Caco-2 (cell line): ENCODE measurements at regions of chr14 and their contacts with region 1.

Region 1: DNA sequence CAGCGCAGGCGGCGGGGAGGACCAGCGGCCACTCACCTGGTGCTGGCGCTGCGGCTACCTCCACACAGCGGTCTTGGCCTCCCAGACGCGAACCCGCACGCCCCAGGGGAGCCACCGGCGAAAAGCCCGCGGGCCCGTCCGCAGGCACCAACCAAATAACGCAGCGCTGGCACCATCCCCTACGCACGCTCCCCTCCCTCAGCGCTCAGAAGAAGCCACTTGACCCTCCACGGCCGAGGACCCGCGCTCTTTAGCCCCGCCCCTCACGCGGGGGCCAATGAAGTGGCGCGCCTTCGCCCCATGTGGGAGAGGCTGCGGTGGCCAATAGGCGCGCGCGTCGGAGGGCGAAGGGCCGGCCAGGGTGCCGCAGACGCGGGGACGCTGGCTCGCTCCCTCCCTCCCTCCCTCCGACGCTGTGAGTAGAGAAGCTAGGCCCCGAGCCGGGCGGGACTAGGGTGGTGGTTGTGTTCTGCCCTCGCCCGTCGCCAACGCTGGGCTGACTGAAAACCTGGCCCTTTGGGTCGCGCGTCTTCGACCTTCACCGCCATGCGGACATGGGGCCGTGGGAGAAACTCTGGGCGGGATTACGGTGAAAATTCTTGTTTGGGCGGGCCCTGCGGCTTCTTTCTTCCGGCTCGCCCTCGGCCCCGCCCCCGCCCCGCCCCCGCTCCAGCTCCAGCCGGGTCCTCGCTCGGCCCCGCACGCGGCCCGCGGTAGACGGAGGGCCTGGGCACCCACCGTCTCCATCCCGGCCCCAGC is at the starts of genes DMAC2L and L2HGDH:
- DNase-seq: peak; percentile 94 to 96
- H3K4me3 ChIP-seq: peak within 1 kb of the TSS; percentile 78
- H3K4me3 Mint-ChIP-seq: peak within 1 kb of the TSS; percentile 87
- H3K27ac Mint-ChIP-seq: peak within 1 kb of the TSS; percentile 92
- H3K4me1 ChIP-seq: 0 out of 2 replicates have a peak, but pooled peaks cover 5% of the 10 kb centered on the region
- H3K4me1 Mint-ChIP-seq: peaks cover 7% of the 10 kb centered on the region
- H3K27me3 ChIP-seq: no peaks in the 10 kb centered on the region
- H3K27me3 Mint-ChIP-seq: no peaks in the 10 kb centered on the region
- CTCF ChIP-seq: peak in 1 of 2 experiments; percentile 7
- total RNA-seq, gene DMAC2L: 25.8 and 27.6 TPM in 2 replicates
- total RNA-seq, gene L2HGDH: 25.0 and 27.6 TPM in 2 replicates

Region 2: GRCh38 chr14:50231475-50232275 is 80.5 kb before region 1 on chr14 and contains the start of gene SOS2:
- CTCF ChIA-PET with region 1: no interaction called
- POLR2A ChIA-PET with region 1: no interaction called
- intact Hi-C with region 1: loop called (anchors 5 kb)
- DNase-seq: peak; percentile 87 to 89
- H3K4me3 ChIP-seq: peak within 1 kb of the TSS; percentile 76
- H3K4me3 Mint-ChIP-seq: peak within 1 kb of the TSS; percentile 87
- H3K27ac Mint-ChIP-seq: peak within 1 kb of the TSS; percentile 76
- H3K4me1 ChIP-seq: peaks cover 6% of the 10 kb centered on the region; the same call in 1 of the 2 replicates
- H3K4me1 Mint-ChIP-seq: no peaks in the 10 kb centered on the region
- H3K27me3 ChIP-seq: no peaks in the 10 kb centered on the region
- H3K27me3 Mint-ChIP-seq: no peaks in the 10 kb centered on the region
- CTCF ChIP-seq: no peak
- total RNA-seq, gene SOS2: 13.0 and 13.9 TPM in 2 replicates

Region 3: DNA sequence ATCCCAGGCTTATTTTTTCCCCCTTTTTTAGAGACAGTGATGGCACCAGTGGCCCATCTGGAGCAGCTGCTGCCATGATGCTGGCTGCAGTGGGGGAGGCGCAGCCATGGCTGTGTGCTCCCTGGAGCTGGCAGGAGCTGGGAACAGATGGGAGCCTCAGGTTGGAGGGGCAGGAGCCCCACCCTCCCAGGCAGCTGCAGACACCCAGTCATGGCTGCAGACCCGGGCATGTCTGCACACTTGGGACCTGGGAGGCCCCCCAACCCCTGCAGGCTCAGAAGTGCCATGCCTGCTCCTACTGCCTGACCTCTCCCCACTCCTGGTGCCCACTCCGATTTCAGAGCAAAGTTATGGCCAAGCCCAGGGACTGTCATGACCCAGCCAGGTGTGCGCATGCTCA is 59.4 kb after region 1 on chr14:
- CTCF ChIA-PET with region 1: no interaction called
- POLR2A ChIA-PET with region 1: no interaction called
- intact Hi-C with region 1: no loop called
- DNase-seq: no peak
- H3K4me3 ChIP-seq: no peak overlapping the region
- H3K4me3 Mint-ChIP-seq: no peak overlapping the region
- H3K27ac Mint-ChIP-seq: no peak overlapping the region
- H3K4me1 ChIP-seq: no peaks in the 10 kb centered on the region
- H3K4me1 Mint-ChIP-seq: no peaks in the 10 kb centered on the region
- H3K27me3 ChIP-seq: no peaks in the 10 kb centered on the region
- H3K27me3 Mint-ChIP-seq: no peaks in the 10 kb centered on the region
- CTCF ChIP-seq: no peak

Region 4: DNA sequence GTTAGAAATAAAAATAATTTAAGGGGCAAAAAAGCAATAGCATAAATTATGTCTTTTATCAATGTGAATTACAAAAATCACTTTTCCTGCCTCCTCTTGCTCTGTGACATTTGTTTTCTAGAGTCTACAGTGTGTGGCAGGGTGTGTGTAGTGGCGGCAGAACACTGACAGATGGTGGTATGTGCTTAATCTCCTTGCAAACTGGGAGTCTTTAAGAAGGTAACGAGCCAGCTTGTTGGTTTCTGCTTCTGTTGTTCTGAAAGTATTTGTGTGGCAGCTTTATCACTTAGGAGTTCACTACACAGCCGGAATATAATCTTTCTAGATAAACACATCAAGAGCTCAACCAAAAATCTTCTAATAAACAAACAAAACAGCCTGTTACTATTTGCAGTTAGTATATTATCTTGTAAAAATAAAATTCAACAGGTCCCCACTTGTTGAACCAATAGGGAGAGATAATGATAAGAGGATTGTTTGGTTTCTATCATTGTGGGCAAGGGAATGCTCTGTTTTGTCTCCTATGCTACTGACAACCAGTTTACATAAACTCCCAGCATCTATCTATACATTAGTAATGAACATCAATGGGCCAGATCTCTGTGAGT is 71.6 kb after region 1 on chr14:
- CTCF ChIA-PET with region 1: no interaction called
- POLR2A ChIA-PET with region 1: no interaction called
- intact Hi-C with region 1: loop called (anchors 5 kb)
- DNase-seq: peak in 1 of 2 experiments; percentile 26
- H3K4me3 ChIP-seq: no peak overlapping the region
- H3K4me3 Mint-ChIP-seq: no peak overlapping the region
- H3K27ac Mint-ChIP-seq: no peak overlapping the region
- H3K4me1 ChIP-seq: peaks cover 12% of the 10 kb centered on the region
- H3K4me1 Mint-ChIP-seq: peaks cover 8% of the 10 kb centered on the region
- H3K27me3 ChIP-seq: no peaks in the 10 kb centered on the region
- H3K27me3 Mint-ChIP-seq: no peaks in the 10 kb centered on the region
- CTCF ChIP-seq: peak in 1 of 2 experiments; percentile 28